ENCODE measurements at regions of chr15 and their contacts with region 1.

Region 1: GRCh38 chr15:91150502-91151160 is 50.6 kb downstream of the SV2B start:
- DNase-seq: no peak
- H3K4me3 ChIP-seq: no peak overlapping the region
- CTCF ChIP-seq: no peak

Region 2: GRCh38 chr15:91099616-91099994 is 51.0 kb before region 1 on chr15:
- in situ Hi-C with region 1: no loop called
- DNase-seq: no peak
- H3K4me3 ChIP-seq: peak overlapping the region; percentile 38
- CTCF ChIP-seq: peak; percentile 11

Region 3: GRCh38 chr15:91116113-91117067 is 34.2 kb before region 1 on chr15:
- in situ Hi-C with region 1: no loop called
- DNase-seq: no peak
- H3K4me3 ChIP-seq: no peak overlapping the region
- CTCF ChIP-seq: no peak

Region 4: GRCh38 chr15:91203619-91204203 is 53.1 kb after region 1 on chr15:
- in situ Hi-C with region 1: loop called (anchors 5 kb)
- DNase-seq: no peak
- H3K4me3 ChIP-seq: no peak overlapping the region
- CTCF ChIP-seq: no peak

Region 5: GRCh38 chr15:91237196-91237844 is 86.7 kb after region 1 on chr15:
- in situ Hi-C with region 1: no loop called
- DNase-seq: no peak
- H3K4me3 ChIP-seq: no peak overlapping the region
- CTCF ChIP-seq: no peak

Region 6: DNA sequence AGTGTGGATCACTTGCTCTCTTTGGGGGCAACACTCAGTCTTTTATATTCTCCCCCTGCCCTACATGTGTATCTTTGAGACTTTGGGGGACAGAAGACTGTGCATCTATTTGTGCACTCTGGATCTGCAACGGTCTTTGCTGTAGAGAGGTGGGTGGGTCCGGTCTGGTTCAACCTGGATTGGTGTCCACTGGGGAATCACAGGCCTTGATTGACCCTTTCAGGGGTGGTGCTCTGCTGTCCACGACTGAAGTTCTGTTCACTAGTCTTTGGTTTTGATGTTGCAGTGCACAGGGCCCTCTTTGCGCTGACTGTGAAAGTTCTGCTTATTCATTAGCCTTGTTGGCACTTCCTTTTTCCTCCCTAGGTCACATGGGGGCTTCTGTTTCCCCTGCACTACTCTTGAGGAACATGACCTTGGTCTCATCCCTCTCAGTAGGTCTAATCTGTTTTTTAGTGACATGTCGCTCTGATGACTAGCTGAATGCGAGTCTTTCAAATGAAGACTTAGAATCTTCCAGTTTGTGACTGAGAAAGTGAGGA is 233.6 kb after region 1 on chr15:
- in situ Hi-C with region 1: no loop called
- DNase-seq: no peak
- H3K4me3 ChIP-seq: no peak overlapping the region
- CTCF ChIP-seq: no peak

Measured in astrocyte of the cerebellum (primary cell).